Motor neuron (in vitro differentiated cells): ENCODE measurements at regions of chr4 and their contacts with region 1.

Region 1: DNA sequence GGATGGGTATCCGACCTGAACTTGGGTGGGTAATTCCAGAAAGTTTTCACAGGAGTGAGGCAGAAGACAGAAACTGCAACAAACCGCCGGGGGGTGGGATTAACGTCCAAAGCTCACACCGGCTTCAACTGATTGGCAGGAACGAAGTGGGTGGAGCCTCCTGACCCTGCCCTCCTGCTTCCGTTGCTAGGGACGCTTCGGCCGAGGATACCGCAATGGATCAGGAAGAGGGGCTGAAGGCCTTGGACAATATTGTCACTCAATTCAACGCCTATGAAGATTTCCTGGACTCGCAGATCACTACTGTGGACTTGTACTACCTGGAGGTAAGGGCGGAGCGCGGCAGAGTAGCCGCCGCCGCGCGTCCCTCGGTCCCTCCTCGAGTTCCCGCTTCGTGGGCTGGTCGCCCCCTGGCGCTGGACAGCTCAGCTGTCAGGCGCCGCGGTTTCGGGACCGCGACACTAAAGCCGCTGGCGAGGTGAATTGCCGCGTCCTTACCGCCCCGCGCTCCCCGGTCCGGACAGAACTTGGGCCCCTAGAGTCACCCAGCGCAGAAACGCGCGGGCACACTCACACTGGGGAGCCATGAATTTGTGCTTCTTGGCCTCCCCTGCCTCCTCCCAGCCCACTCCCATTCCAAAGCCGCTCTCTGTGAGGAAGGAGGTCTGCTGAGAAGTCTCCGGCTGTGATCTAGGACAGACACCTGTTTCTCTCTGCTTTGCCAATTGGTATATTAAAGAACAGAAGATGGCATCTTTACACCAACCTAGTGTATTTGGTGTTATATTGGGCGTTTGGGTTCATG is at the start of gene CFAP299:
- ATAC-seq: peak; percentile 95 to 97 (median 96)
- H3K4me3 ChIP-seq: peak within 1 kb of the TSS; percentile 63 to 98 (median 78)
- H3K27ac ChIP-seq: no peak within 1 kb of the TSS
- H3K4me1 ChIP-seq: no peaks in the 10 kb centered on the region
- total RNA-seq, gene CFAP299: 0.41 to 7.1 (median 0.74) TPM

Region 2: DNA sequence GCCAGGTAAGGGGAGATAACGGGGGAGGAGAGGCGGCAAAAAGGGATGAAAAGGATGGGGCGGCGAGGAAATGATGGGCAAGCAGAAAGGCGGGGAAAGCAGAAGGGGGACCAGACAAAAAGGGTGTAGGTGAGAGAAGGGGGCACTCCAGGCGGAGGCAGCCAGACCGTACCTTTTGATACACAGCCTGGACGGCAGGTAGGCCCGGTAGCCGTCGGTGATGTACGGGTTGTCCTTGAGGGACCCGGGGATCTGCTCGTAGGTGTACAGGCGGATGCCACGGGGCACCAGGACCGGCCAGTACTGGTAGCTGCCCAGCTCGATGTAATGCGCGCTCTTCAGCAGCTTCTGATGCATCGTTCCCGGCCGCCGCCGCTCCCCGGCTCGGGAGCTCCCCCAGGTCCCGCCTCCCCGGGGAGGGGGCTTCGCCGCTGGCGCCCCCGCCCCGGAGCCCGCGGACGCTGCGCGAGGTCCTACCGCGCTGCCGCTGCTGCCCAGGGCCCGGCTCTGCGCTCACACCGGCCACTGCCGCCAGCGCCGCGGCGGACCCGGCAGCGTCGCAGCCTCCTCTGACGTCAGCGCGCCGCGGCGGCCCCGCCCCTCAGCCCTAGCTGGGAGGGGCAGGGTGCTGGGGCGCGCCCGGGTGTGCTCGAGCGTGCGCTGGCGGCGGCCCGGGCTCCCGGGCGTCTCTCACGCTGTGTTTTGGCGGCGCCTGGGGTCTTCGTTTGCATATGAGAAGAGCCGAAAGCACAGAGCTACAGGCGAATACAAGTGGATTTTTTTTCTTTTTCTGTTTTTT is 1396.7 kb before region 1 on chr4 and contains the start of gene PAQR3:
- in situ Hi-C with region 1: loop called in 1 of 9 experiments (anchors 25 kb)
- ATAC-seq: peak; percentile 92 to 98 (median 94)
- H3K4me3 ChIP-seq: peak within 1 kb of the TSS; percentile 54 to 80 (median 72)
- H3K27ac ChIP-seq: peak within 1 kb of the TSS; percentile 47 to 59
- H3K4me1 ChIP-seq: peaks cover 15 to 29% of the 10 kb centered on the region in 2 donors
- total RNA-seq, gene PAQR3: 18.6 to 84.1 (median 61.6) TPM

Region 3: DNA sequence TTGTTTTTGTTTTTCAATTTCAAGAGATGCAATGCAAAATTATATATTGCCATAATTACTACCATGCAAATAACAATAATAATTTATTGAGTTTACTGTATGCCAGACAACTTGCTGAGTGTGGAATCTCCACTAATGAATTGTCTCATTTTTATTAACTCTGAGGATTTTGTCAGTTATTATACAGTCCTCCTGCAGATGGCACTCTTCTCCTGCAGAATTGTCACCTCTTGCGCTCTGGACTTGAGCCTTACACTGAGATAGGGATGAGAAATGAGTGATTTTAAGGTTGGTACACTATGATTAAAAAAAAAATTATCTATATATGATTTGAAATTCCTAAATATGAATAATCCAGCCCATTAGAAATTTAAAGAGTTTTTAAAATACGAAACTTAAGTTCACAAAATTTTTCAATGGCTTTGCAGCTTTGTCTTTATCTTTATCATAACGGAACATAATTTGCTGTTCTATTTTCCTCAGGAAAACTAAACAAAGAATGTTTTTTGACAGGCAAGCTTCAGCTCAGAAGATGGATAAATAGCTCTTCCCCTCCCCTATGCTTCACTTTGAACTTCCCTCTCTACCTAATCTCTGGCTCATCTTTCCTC is 1383.8 kb before region 1 on chr4:
- in situ Hi-C with region 1: loop called in 2 of 9 experiments (anchors 25 kb)
- ATAC-seq: peak; percentile 43 to 67 (median 57)
- H3K4me3 ChIP-seq: no peak overlapping the region
- H3K27ac ChIP-seq: no peak overlapping the region
- H3K4me1 ChIP-seq: peaks cover 4 to 17% of the 10 kb centered on the region in 2 donors

Region 4: GRCh38 chr4:80237992-80238391 is 97.8 kb before region 1 on chr4:
- in situ Hi-C with region 1: loop called in 1 of 9 experiments (anchors 25 kb)
- ATAC-seq: peak in 3 of 8 experiments; percentile 88 to 97 (median 97)
- H3K4me3 ChIP-seq: no peak overlapping the region
- H3K27ac ChIP-seq: no peak overlapping the region
- H3K4me1 ChIP-seq: no peaks in the 10 kb centered on the region